ENCODE measurements at regions of chr16 and their contacts with region 1.

Region 1: GRCh38 chr16:87017365-87018012 is 299.7 kb downstream of the C16orf95 start:
- DNase-seq: no peak
- H3K4me3 ChIP-seq: no peak overlapping the region
- H3K27ac ChIP-seq: no peak overlapping the region
- H3K4me1 ChIP-seq: no peaks in the 10 kb centered on the region; a peak in 1 of 7 replicates
- H3K27me3 ChIP-seq: no peaks in the 10 kb centered on the region
- CTCF ChIP-seq: peak in 2 of 3 experiments; percentile 20 to 51; a peak in 2 of 4 replicates
- EP300 ChIP-seq: no peak
- POLR2A ChIP-seq: no peak
- RAD21 ChIP-seq: peak; percentile 40 to 53

Region 2: DNA sequence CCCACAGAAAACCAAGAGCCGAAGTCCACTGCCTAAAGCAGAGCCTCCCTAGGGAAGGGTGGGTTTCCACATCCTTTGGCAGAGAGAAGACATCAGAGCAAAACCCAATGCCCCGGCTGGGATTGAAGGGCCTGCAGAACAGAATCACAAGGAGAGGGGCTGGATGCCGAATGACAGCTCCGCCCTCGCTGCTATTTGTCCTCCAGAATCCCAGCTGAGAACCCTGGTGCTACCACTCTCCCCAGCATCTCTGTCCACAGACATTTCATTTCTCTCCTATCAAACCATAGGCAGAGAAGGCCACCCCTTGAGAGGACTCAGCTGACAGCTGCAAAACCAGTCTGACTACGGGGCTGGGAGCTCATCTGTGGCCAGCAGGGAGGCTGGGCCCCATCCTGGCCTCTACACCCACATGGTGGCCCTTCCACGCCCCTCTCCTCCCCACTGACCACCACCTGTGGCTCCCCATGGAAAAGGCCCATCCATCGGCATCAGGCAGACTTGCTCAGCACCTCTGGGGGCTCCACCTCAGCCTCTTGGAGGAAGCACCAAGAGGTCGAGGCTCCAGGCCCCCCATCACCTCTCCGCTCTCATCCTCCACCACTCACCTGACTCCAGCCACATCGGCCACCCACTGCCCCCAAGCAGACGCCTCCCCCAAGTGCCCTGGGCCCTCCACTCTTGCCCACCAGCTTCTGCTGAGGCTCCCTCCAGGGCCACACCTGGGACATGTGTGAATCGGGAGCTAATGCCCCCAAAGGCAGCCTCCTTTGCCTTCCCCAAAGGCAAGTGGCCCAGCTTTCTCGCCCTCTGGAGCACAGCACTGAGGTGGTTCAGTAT is 11.2 kb after region 1 on chr16:
- CTCF ChIA-PET with region 1: interaction called, 10 read pairs
- POLR2A ChIA-PET with region 1: no interaction called
- DNase-seq: no peak
- H3K4me3 ChIP-seq: no peak overlapping the region
- H3K27ac ChIP-seq: no peak overlapping the region
- H3K4me1 ChIP-seq: no peaks in the 10 kb centered on the region; a peak in 1 of 7 replicates
- H3K27me3 ChIP-seq: no peaks in the 10 kb centered on the region
- CTCF ChIP-seq: no peak
- EP300 ChIP-seq: no peak
- POLR2A ChIP-seq: no peak
- RAD21 ChIP-seq: no peak

Measured in H1 (cell line).